ENCODE measurements at regions of chr7 and their contacts with region 1.

Region 1: GRCh38 chr7:140810830-140811556 is 113.7 kb downstream of the BRAF start:
- DNase-seq: peak; percentile 40 to 56
- ATAC-seq: peak; percentile 95

Region 2: GRCh38 chr7:141001122-141001521 is 190.1 kb after region 1 on chr7:
- intact Hi-C with region 1: loop called in 1 of 2 experiments (anchors 10 kb)
- DNase-seq: no peak
- ATAC-seq: no peak

Region 3: DNA sequence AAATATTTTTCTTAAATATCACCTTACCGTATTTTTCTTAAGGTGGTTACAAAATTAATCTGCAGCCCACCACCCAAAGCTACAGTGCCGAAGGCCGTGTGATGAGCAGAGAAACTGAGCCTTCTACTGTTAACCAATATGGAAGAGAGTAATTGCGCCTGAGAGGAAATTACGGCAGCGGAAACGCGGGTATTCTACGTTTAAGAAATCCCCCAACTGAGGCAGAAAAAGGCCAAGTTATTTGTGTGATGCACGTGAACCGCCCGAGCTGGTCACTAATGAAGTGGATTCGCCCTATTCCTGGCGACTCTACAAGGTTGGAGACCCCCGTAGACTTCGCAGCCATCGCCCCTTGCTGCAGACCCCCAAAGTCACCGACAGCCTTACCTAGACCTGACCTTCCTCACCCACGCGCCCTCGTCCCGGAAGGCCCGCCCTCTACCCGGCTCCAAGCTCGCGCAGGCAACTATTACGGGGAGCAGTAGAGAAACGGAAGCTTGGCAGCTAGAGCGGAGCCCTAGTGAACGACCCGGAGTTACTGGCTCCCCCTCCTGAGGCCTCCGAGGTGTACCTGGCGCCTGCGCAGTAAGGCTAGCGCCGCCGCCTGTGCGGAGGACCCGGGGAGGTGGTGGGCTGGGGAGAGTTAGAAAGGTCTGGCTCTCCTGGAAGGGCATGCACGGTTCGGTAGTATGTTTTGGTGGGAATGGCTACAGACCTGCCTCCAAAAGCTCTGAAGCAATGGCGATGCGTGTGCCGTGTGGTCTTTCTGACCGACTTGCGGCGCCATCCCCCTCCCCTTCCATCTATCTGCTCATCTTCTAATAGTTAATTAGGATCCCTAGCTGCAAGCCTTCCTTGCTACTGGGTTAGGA is 203.8 kb after region 1 on chr7 and contains the start of gene MRPS33:
- intact Hi-C with region 1: loop called (anchors 5 to 10 kb)
- DNase-seq: peak; percentile 95 to 97
- ATAC-seq: peak; percentile 94
- total RNA-seq, gene MRPS33: 83.0 to 89.6 TPM

Measured in left colon (tissue), 2 donors.